Left ventricle myocardium superior (tissue), 1 donor: ENCODE measurements at regions of chr5 and their contacts with region 1.

Region 1: GRCh38 chr5:91101600-91102379 is 281.3 kb downstream of the ARRDC3 start:
- DNase-seq: peak; percentile 70
- ATAC-seq: peak; percentile 96

Region 2: DNA sequence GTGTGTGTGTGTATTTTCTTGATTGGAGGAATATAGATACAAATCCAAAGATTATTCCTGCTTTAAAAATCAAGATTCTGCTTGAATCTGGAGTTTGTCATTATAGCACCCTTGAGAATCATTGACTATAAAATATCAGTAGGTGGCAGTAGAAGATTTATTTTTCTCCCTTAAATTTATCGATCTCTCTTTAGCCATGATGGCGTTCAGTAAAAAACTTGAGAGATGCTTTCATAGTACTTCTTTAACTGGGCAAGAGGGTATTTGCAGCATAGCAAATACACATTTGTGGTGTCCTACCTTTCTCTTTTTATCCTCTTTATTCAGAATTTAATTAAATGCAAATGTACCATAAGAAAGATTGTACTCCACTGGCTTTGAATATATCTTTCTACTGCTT is 235.5 kb before region 1 on chr5:
- intact Hi-C with region 1: loop called (anchors 5 kb)
- DNase-seq: no peak
- ATAC-seq: peak; percentile 54

Region 3: GRCh38 chr5:90932052-90932699 is 169.6 kb before region 1 on chr5:
- intact Hi-C with region 1: loop called (anchors 10 kb)
- DNase-seq: no peak
- ATAC-seq: peak; percentile 58

Region 4: DNA sequence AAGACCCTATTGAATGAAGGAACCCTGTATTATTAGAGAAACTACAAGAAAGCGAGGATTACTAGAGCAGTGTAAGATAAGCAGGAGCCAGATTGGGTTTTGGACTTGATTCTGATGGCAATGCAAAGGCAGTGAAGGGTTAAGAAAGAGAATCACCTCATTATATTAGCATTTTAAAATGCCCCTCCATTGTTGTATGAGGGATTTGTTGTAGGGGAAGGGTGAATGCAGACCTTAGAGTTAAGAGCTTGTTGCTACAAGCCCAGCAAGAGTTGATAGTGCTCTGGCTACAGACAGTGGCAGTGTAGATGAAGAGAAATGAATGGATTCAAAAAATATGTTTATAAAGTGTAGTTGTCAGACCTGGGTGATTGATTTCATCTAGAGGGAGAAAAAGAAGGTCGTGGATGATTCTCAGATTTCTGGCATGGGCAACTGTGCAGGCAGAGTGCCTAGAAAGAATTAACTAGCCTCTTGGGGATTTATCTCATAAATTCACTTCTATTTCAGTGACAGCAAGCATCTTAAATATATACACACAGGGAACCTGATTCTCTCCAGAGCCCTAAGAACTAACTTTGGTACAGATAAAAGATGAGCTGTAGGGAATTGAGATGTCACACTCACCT is 63.5 kb before region 1 on chr5:
- intact Hi-C with region 1: no loop called
- DNase-seq: no peak
- ATAC-seq: no peak

Region 5: DNA sequence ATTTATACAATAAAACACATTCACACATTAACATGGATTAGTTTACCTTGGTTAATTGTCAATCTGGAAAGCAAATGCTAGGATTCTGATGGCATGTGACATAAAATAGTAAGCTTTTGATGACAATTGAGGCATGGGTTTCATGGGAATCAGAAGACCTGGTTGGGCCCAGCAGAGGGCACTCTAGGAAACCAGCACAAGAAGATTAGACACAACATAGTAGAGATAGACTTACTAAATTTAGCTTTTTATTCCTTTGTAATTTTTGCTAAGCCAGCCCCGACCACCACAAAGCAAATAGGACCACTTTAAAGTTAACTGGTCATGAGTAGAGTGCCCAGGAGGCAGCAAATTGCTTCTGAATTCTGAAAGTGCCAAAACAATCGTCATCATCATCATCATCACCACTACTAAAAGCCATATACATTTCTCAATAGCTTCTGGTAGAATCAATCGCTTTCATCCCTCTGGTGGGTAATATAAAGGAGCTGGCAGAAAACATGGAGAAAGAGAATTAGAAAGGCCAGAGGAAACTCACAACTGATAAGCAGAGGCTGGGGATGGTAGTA is 118.1 kb after region 1 on chr5:
- intact Hi-C with region 1: loop called (anchors 10 kb)
- DNase-seq: peak; percentile 36
- ATAC-seq: peak; percentile 44

Region 6: DNA sequence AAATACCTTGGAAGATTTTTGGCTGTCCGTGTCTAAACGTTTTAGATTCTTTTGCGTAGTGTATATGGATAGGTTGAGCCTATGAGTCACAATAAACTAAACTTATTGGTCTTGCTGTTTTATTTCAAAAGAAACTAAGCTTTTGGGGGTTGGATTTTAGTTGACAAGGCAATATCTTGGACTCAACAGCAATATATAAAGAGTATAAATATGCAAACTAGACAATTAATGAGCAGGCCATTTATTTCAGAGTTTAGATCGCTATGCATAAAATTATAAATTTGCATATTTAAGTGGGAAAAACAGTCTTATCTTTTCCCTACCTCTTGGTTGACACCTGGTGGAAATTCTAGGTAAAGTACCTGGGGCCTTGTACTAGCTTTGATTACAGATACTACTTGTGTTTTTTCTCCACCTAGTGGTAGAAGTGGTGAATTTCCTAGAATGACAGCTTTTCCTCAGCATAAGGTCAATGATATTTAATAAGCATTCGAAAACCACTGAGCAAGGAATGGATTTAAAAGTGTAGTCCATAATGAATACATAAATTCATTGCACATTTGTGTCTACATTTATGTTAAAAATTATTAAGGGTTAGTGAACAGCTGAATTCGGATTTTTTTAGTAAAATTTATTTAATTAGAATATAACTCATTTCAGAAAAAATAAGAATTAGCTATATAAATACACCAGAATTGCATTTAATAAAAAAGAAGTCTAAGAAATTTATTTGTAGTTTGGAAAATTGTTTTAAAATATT is 283.1 kb after region 1 on chr5:
- intact Hi-C with region 1: loop called (anchors 2 kb)
- DNase-seq: no peak
- ATAC-seq: peak; percentile 5

Region 7: GRCh38 chr5:91419571-91420537 is 318.1 kb after region 1 on chr5:
- intact Hi-C with region 1: loop called (anchors 10 kb)
- DNase-seq: peak; percentile 47
- ATAC-seq: no peak